Dendritic cell treated with granulocyte-macrophage colony-stimulating factor and Interleukin-4, amounts not matched to agents 40 ng/mL and 50 ng/mL, for 4 days (primary cell): ENCODE measurements at regions of chr11 and their contacts with region 1.

Region 1: DNA sequence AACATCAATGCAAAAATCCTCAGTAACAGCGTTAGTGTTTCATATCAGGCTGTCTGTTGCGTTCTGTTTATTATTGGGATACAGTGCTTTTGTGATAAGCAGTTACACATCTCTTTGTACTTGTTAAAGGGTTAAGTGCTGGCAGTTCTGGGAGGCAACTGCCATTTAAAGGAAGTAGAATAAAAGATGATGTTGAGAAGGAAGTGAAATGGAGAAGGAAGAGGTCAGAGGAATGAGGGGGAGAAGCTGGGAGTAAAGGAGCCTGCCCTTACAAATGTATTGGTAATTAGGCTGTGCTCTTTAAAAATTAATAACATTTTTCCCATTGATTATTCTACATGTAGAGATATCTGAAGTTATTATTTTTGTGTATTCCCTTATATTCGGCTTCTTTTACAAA is 674.7 kb downstream of the NTM start:
- H3K4me3 Mint-ChIP-seq: no peak overlapping the region
- H3K27ac Mint-ChIP-seq: peak overlapping the region; percentile 23
- H3K4me1 Mint-ChIP-seq: peaks cover 78% of the 10 kb centered on the region
- H3K27me3 Mint-ChIP-seq: no peaks in the 10 kb centered on the region

Region 2: DNA sequence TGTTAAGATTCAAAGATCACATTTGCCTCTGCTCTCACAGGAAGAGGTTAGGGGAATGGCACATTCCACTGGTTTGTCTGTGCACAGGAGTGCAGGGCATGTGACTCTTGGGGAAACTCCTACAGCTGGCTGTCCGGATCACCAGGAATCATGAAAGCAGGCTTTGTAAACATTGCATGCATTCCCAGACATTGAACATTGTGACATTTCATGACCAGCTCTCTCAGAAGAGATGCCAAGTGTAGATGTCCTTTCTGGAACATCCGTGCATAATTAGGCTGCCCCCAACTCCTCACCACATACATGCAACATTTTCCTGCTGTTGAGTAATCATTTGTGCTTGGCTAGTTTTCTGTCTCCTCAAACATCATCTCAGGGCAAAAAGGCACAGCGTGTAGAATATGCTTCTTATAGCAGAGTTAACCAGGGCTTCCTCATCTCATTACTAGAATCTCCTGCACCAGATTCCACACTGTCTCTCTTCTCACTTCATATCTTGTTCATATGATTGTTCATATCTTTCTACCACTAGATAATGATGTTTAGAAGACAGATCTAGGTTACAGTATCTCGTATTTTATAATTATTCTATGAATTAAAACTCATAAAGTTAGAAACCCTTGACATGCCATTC is 20.0 kb after region 1 on chr11:
- intact Hi-C with region 1: loop called (anchors 2 kb)
- H3K4me3 Mint-ChIP-seq: no peak overlapping the region
- H3K27ac Mint-ChIP-seq: no peak overlapping the region
- H3K4me1 Mint-ChIP-seq: peaks cover 50% of the 10 kb centered on the region
- H3K27me3 Mint-ChIP-seq: no peaks in the 10 kb centered on the region

Region 3: DNA sequence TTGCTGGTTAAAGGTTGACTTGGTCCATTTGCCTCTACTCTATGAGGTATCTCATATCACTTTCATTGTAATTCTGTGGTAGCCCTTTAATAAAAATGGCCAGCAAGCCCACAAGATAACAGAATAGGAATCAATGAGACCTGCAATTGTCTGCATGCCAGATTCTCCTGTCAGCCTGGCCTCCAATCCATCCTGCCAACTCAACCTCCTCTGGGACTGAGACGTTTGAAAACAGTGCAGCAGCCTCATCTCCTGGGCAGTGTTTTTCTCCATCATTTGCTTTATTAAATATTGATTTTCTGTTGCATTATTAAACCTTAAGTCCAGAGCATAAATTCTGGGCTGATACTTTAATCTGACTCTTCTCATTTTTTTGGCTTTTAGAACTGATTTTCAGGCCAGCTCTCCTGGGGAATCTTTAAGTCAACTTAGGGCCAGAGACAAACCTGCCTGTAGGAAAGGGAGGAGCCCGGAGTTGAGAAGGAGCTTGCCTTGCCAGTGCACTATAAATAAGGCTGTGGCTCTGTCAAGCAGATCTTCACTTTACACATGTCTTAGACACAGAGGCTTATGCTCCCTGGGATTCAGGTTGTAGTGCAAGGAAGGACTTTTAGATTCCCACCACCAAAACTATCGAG is 123.4 kb after region 1 on chr11:
- intact Hi-C with region 1: no loop called
- H3K4me3 Mint-ChIP-seq: no peak overlapping the region
- H3K27ac Mint-ChIP-seq: no peak overlapping the region
- H3K4me1 Mint-ChIP-seq: no peaks in the 10 kb centered on the region
- H3K27me3 Mint-ChIP-seq: no peaks in the 10 kb centered on the region

Region 4: GRCh38 chr11:132318421-132319157 is 273.5 kb after region 1 on chr11:
- intact Hi-C with region 1: no loop called
- H3K4me3 Mint-ChIP-seq: no peak overlapping the region
- H3K27ac Mint-ChIP-seq: no peak overlapping the region
- H3K4me1 Mint-ChIP-seq: no peaks in the 10 kb centered on the region
- H3K27me3 Mint-ChIP-seq: no peaks in the 10 kb centered on the region